ENCODE measurements at regions of chr18 and their contacts with region 1.

Region 1: DNA sequence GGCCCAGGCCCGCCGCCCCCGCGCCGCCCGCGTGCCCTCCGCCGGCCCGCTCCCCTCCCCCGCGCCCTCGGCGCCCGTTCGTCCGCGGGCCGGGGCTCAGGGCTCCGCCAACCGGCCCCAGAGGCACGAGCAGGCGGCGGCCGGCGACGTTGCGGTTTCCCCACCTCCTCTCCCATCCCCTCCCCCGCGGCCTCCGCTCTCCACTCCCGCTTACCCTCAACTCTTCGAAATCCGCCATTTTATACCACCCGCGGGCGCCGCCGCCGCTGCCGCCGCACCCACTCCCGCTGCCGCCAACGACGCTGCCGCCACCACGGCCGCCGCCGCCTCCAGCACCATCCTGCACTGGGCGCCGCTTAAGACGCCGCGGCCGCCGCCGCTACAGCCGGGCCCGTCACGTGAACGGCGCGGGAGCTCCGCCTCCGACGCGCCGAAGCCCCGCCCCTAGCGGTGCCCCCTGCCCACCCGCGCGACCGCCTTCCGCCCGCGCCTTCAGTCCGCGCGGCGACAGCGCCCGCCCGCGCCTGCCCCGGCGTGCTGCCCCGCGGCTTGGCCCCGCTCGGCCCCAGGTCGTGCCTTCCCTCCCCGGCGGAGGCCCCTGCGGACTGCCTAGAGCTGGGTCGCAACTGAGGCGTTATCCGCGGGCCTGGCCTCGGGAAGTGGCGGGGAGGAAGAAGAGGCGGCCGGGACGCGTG is at the starts of genes KATNAL2 and PIAS2:
- DNase-seq: peak; percentile 65 to 83 (median 70)
- ATAC-seq: peak; percentile 91
- H3K4me3 ChIP-seq: peak within 1 kb of the TSS; percentile 59
- H3K4me3 Mint-ChIP-seq: peak within 1 kb of the TSS; percentile 90 to 97 (median 93)
- H3K27ac ChIP-seq: peak within 1 kb of the TSS; percentile 75
- H3K27ac Mint-ChIP-seq: peak within 1 kb of the TSS; percentile 82 to 94 (median 87)
- H3K4me1 ChIP-seq: peaks cover 12 to 26% of the 10 kb centered on the region in 2 donors
- H3K4me1 Mint-ChIP-seq: peaks cover 36 to 56% (median 52%) of the 10 kb centered on the region in 7 donors
- H3K27me3 ChIP-seq: no peaks in the 10 kb centered on the region
- H3K27me3 Mint-ChIP-seq: peaks cover 0 to 7% (median 0%) of the 10 kb centered on the region in 5 donors
- total RNA-seq, gene KATNAL2: 1.1 to 2.8 (median 1.7) TPM
- total RNA-seq, gene PIAS2: 29.8 to 40.6 (median 36.1) TPM

Region 2: GRCh38 chr18:46677611-46678010 is 239.6 kb before region 1 on chr18:
- CTCF ChIA-PET with region 1: no interaction called
- POLR2A ChIA-PET with region 1: no interaction called
- intact Hi-C with region 1: loop called in 1 of 2 experiments (anchors 10 kb)
- DNase-seq: no peak
- ATAC-seq: no peak
- H3K4me3 ChIP-seq: no peak overlapping the region
- H3K4me3 Mint-ChIP-seq: no peak overlapping the region
- H3K27ac ChIP-seq: no peak overlapping the region
- H3K27ac Mint-ChIP-seq: no peak overlapping the region
- H3K4me1 ChIP-seq: peaks cover 0 to 4% of the 10 kb centered on the region in 2 donors
- H3K4me1 Mint-ChIP-seq: peaks cover 3 to 9% (median 5%) of the 10 kb centered on the region in 7 donors
- H3K27me3 ChIP-seq: no peaks in the 10 kb centered on the region
- H3K27me3 Mint-ChIP-seq: peaks cover 0 to 24% (median 4%) of the 10 kb centered on the region in 5 donors

Region 3: GRCh38 chr18:46829947-46830346 is 87.3 kb before region 1 on chr18:
- CTCF ChIA-PET with region 1: no interaction called
- POLR2A ChIA-PET with region 1: no interaction called
- intact Hi-C with region 1: no loop called
- DNase-seq: no peak
- ATAC-seq: no peak
- H3K4me3 ChIP-seq: no peak overlapping the region
- H3K4me3 Mint-ChIP-seq: no peak overlapping the region
- H3K27ac ChIP-seq: no peak overlapping the region
- H3K27ac Mint-ChIP-seq: no peak overlapping the region
- H3K4me1 ChIP-seq: no peaks in the 10 kb centered on the region
- H3K4me1 Mint-ChIP-seq: peaks cover 0 to 3% (median 0%) of the 10 kb centered on the region in 7 donors
- H3K27me3 ChIP-seq: no peaks in the 10 kb centered on the region
- H3K27me3 Mint-ChIP-seq: no peaks in the 10 kb centered on the region

Region 4: DNA sequence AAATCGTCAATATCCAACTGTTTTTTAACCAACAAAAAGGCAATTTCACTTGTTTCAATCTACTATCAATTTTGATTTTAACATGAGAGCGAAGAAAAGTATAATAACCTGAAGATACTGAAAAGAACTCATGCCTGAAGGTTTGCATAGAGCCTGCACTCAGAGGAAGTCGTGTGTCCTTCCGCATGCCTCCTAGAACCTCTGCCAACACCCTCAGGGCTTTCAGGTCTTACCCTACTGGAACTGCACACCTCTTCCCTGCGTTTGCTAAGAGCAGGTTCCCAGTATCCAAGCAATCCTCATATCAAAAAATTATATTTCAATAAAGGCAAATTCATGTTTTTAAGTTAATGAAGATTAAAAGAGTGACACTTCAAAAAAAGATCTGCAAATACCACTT is 74.7 kb before region 1 on chr18:
- CTCF ChIA-PET with region 1: no interaction called
- POLR2A ChIA-PET with region 1: no interaction called
- intact Hi-C with region 1: loop called in 1 of 2 experiments (anchors 5 kb)
- DNase-seq: no peak
- ATAC-seq: no peak
- H3K4me3 ChIP-seq: no peak overlapping the region
- H3K4me3 Mint-ChIP-seq: no peak overlapping the region
- H3K27ac ChIP-seq: no peak overlapping the region
- H3K27ac Mint-ChIP-seq: peak overlapping the region in 1 of 9 donors; percentile 42
- H3K4me1 ChIP-seq: no peaks in the 10 kb centered on the region
- H3K4me1 Mint-ChIP-seq: no peaks in the 10 kb centered on the region
- H3K27me3 ChIP-seq: no peaks in the 10 kb centered on the region
- H3K27me3 Mint-ChIP-seq: no peaks in the 10 kb centered on the region

Region 5: DNA sequence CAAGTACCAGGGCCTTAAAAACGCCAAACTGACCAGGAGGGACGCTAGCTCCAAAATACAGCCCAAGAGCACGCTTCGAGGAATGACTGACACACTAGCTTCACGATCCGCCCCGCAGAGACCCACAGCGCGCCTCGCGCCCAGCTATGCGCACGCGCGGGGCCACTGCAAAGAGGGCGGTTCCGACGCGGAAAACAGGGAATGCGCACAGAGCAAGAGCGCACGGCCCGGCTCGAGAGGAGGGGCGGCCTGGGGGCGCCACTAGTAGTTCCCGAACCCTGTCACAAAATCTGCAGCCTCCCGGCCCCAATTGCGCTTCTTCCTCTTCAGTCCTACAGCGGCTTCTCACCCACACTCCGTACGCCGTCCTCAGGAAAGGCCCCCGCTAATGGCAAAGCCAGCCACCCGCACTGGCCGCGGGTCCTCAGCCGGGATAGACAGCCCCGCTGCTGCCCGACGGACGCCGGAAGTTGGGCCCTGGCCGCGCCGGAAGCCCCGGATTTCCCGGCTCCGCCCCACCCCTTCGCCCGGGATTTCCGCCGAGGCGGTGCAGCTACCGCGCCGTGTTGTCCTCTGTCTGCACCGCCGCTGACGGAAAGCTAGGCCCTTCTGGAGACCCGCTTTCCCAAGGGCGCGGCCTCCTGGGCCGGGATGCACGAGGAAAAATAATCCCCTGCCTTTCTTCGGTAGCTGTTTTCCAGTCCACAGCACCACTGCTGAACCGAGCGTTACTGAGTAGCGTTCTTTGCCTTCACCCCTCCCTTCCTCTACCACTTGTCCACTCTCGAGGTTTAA is 233.0 kb after region 1 on chr18 and contains the start of gene HDHD2:
- CTCF ChIA-PET with region 1: no interaction called
- POLR2A ChIA-PET with region 1: interaction called, 4 read pairs
- intact Hi-C with region 1: loop called in 1 of 2 experiments (anchors 1 kb)
- DNase-seq: peak; percentile 52 to 90 (median 66)
- ATAC-seq: peak; percentile 86
- H3K4me3 ChIP-seq: peak within 1 kb of the TSS; percentile 88
- H3K4me3 Mint-ChIP-seq: peak within 1 kb of the TSS; percentile 93 to 99 (median 98)
- H3K27ac ChIP-seq: peak within 1 kb of the TSS; percentile 83
- H3K27ac Mint-ChIP-seq: peak within 1 kb of the TSS; percentile 96 to 100 (median 97)
- H3K4me1 ChIP-seq: peaks cover 18 to 24% of the 10 kb centered on the region in 2 donors
- H3K4me1 Mint-ChIP-seq: peaks cover 28 to 64% (median 57%) of the 10 kb centered on the region in 7 donors
- H3K27me3 ChIP-seq: no peaks in the 10 kb centered on the region
- H3K27me3 Mint-ChIP-seq: no peaks in the 10 kb centered on the region
- total RNA-seq, gene HDHD2: 22.7 to 45.7 (median 38.0) TPM